ENCODE measurements at regions of chr10 and their contacts with region 1.

Region 1: GRCh38 chr10:17228091-17228940 is at the start of gene VIM:
- DNase-seq: peak; percentile 72 to 84 (median 81)
- ATAC-seq: peak; percentile 40
- H3K4me3 ChIP-seq: peak within 1 kb of the TSS; percentile 93
- H3K4me3 Mint-ChIP-seq: peak within 1 kb of the TSS; percentile 87 to 100 (median 97)
- H3K27ac ChIP-seq: peak within 1 kb of the TSS; percentile 83
- H3K27ac Mint-ChIP-seq: peak within 1 kb of the TSS; percentile 91 to 100 (median 97)
- H3K4me1 ChIP-seq: peaks cover 34 to 39% of the 10 kb centered on the region in 2 donors
- H3K4me1 Mint-ChIP-seq: peaks cover 25 to 61% (median 55%) of the 10 kb centered on the region in 7 donors
- H3K27me3 ChIP-seq: no peaks in the 10 kb centered on the region
- H3K27me3 Mint-ChIP-seq: peaks cover 0 to 3% (median 0%) of the 10 kb centered on the region in 5 donors
- total RNA-seq, gene VIM: 498 to 2,181 (median 1,002) TPM

Region 2: DNA sequence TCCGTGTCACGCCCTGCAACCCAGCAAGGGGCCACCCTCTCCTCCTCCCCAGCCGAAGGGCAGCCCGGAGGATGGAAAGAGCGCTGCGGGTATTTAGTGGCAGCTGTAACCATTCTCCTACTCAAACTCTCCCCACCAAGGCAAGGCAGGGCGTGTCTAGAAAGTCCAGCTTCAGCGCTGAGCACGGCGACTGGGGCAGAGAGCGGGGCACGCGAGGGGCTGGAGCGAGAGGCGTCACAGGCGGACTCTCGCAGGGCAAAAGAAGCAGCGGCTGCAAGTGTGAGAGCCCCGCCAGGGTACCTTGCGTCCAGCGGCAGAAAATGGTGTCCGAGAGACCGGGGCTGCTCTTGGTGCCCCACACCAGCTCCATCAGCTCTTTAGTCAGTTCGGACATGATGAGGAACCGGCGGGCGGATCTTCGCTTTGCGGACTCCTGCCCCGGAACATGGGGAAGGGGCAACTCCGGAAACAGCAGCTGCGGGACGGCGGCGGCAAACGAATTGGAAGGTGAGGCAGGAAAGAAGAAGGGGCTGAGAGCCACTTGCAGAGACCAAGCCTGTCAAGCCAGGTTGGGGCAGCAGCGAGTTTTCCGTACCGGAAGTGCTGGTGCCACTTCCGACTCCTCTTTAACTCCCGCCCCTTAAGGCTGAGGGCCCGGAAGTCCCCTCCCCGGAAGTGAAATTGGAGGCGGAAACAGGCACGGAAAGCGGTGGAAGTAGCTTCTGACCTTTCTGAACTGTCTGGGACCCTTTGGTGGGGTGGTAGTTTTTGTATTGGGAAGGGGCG is 1368.2 kb before region 1 on chr10 and contains the start of gene MINDY3:
- CTCF ChIA-PET with region 1: no interaction called
- POLR2A ChIA-PET with region 1: no interaction called
- intact Hi-C with region 1: loop called in 1 of 2 experiments (anchors 1 kb)
- DNase-seq: peak; percentile 54 to 86 (median 82)
- ATAC-seq: peak; percentile 94
- H3K4me3 ChIP-seq: peak within 1 kb of the TSS; percentile 97
- H3K4me3 Mint-ChIP-seq: peak within 1 kb of the TSS; percentile 95 to 100 (median 98)
- H3K27ac ChIP-seq: peak within 1 kb of the TSS; percentile 55
- H3K27ac Mint-ChIP-seq: peak within 1 kb of the TSS; percentile 90 to 96 (median 93)
- H3K4me1 ChIP-seq: peaks cover 10 to 22% of the 10 kb centered on the region in 2 donors
- H3K4me1 Mint-ChIP-seq: peaks cover 25 to 53% (median 45%) of the 10 kb centered on the region in 7 donors
- H3K27me3 ChIP-seq: no peaks in the 10 kb centered on the region
- H3K27me3 Mint-ChIP-seq: peaks cover 19 to 24% (median 22%) of the 10 kb centered on the region in 5 donors
- total RNA-seq, gene MINDY3: 21.4 to 43.8 (median 37.4) TPM

Region 3: DNA sequence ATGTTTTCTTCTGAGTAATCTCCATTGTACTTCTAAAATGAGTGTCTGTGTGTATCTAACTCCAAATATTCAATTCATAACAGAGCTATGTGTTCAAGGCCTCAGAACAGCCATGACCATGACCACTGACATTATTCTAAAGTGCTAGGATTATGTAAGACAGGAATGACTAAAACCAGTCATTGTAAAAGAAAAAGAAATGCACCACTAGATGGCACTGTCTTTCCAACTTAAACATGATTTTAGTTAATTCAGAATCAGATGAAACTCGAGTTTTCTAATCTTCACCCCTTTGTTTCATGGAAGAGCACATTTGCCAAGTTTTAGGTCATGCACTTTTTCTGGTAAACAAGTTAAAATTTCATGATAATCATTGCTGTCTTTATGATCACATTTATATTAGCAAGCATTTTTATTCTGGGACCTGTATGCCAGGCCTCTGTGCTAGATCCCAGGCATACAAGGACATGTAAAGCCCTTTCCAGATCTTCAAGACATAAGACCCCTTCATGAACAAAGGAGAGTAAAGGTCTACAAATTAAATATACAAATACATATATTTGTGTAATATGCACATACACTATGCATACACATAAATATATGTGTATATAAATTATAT is 385.0 kb before region 1 on chr10:
- CTCF ChIA-PET with region 1: no interaction called
- POLR2A ChIA-PET with region 1: interaction called, 3 read pairs
- intact Hi-C with region 1: loop called (anchors 1 kb)
- DNase-seq: peak in 7 of 9 donors; percentile 44 to 71 (median 63)
- ATAC-seq: peak; percentile 86
- H3K4me3 ChIP-seq: no peak overlapping the region
- H3K4me3 Mint-ChIP-seq: no peak overlapping the region
- H3K27ac ChIP-seq: no peak overlapping the region
- H3K27ac Mint-ChIP-seq: peak overlapping the region in 5 of 9 donors; percentile 18 to 43 (median 34)
- H3K4me1 ChIP-seq: no peaks in the 10 kb centered on the region
- H3K4me1 Mint-ChIP-seq: peaks cover 0 to 9% (median 3%) of the 10 kb centered on the region in 7 donors
- H3K27me3 ChIP-seq: no peaks in the 10 kb centered on the region
- H3K27me3 Mint-ChIP-seq: peaks cover 0 to 2% (median 0%) of the 10 kb centered on the region in 5 donors

Region 4: GRCh38 chr10:17029581-17030271 is 198.6 kb before region 1 on chr10:
- CTCF ChIA-PET with region 1: no interaction called
- POLR2A ChIA-PET with region 1: interaction called, 24 read pairs
- intact Hi-C with region 1: loop called in 1 of 2 experiments (anchors 1 kb)
- DNase-seq: peak; percentile 31 to 82 (median 50)
- ATAC-seq: peak; percentile 69
- H3K4me3 ChIP-seq: peak overlapping the region; percentile 46
- H3K4me3 Mint-ChIP-seq: peak overlapping the region; percentile 64 to 87 (median 83)
- H3K27ac ChIP-seq: peak overlapping the region; percentile 70
- H3K27ac Mint-ChIP-seq: peak overlapping the region; percentile 75 to 97 (median 93)
- H3K4me1 ChIP-seq: peaks cover 52 to 53% of the 10 kb centered on the region in 2 donors
- H3K4me1 Mint-ChIP-seq: peaks cover 33 to 88% (median 81%) of the 10 kb centered on the region in 7 donors
- H3K27me3 ChIP-seq: no peaks in the 10 kb centered on the region
- H3K27me3 Mint-ChIP-seq: peaks cover 0 to 7% (median 0%) of the 10 kb centered on the region in 5 donors

Region 5: GRCh38 chr10:17216217-17216900 is 12.0 kb before region 1 on chr10:
- CTCF ChIA-PET with region 1: interaction called, 3 read pairs
- POLR2A ChIA-PET with region 1: interaction called, 31 read pairs
- intact Hi-C with region 1: loop called (anchors 1 kb)
- DNase-seq: no peak
- ATAC-seq: peak; percentile 91
- H3K4me3 ChIP-seq: no peak overlapping the region
- H3K4me3 Mint-ChIP-seq: peak overlapping the region in 2 of 10 donors; percentile 36 to 39
- H3K27ac ChIP-seq: no peak overlapping the region
- H3K27ac Mint-ChIP-seq: peak overlapping the region in 5 of 9 donors; percentile 32 to 95 (median 50)
- H3K4me1 ChIP-seq: peaks cover 5 to 11% of the 10 kb centered on the region in 2 donors
- H3K4me1 Mint-ChIP-seq: peaks cover 0 to 47% (median 5%) of the 10 kb centered on the region in 7 donors
- H3K27me3 ChIP-seq: no peaks in the 10 kb centered on the region
- H3K27me3 Mint-ChIP-seq: no peaks in the 10 kb centered on the region

Region 6: GRCh38 chr10:17512341-17513001 is 284.2 kb after region 1 on chr10:
- CTCF ChIA-PET with region 1: no interaction called
- POLR2A ChIA-PET with region 1: no interaction called
- intact Hi-C with region 1: loop called in 1 of 2 experiments (anchors 5 kb)
- DNase-seq: no peak
- ATAC-seq: no peak
- H3K4me3 ChIP-seq: no peak overlapping the region
- H3K4me3 Mint-ChIP-seq: no peak overlapping the region
- H3K27ac ChIP-seq: no peak overlapping the region
- H3K27ac Mint-ChIP-seq: peak overlapping the region in 2 of 9 donors; percentile 14 to 27
- H3K4me1 ChIP-seq: peaks cover 0 to 24% of the 10 kb centered on the region in 2 donors
- H3K4me1 Mint-ChIP-seq: peaks cover 0 to 31% (median 6%) of the 10 kb centered on the region in 7 donors
- H3K27me3 ChIP-seq: no peaks in the 10 kb centered on the region
- H3K27me3 Mint-ChIP-seq: peaks cover 0 to 5% (median 0%) of the 10 kb centered on the region in 5 donors